Naive thymus-derived CD8-positive, alpha-beta T cell (primary cell): ENCODE measurements at regions of chr15 and their contacts with region 1.

Region 1: DNA sequence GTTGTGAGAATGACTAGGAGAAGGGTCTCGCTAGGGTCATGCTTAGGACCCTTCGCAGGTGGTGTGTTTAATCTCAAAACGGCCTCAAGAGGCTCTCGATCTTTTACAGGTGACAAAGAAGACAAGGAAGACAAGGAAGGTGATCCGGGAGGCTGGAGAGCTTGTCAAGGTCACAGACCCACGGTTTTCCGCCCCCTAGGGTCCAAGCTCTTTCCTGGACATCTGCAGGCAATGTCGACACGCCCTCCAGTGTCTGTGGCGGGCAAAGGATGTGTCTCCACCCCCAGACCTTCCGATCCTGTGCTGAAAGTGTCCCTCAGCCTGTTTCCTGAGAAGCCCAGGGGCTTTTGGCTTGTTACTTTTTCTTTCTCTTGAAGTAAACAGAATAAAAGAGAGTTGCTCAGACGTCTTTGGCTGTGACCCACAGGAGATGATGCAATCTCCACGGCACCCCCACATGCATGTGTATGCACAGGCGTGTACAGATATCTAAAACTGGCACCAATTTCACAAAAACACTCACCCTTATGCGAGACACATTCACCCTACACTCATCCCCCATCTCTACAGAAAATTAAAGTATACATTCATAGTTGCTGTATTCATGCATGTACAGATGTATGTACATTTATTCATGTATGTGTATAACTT is 108.8 kb downstream of the KLF13 start:
- DNase-seq: peak; percentile 49 to 94 (median 86)
- ATAC-seq: peak; percentile 73 to 78
- H3K4me3 Mint-ChIP-seq: peak overlapping the region; percentile 77 to 91 (median 84)
- H3K27ac Mint-ChIP-seq: peak overlapping the region; percentile 93 to 100 (median 100)
- H3K4me1 Mint-ChIP-seq: peaks cover 45 to 89% (median 79%) of the 10 kb centered on the region in 4 donors
- H3K27me3 Mint-ChIP-seq: no peaks in the 10 kb centered on the region

Region 2: DNA sequence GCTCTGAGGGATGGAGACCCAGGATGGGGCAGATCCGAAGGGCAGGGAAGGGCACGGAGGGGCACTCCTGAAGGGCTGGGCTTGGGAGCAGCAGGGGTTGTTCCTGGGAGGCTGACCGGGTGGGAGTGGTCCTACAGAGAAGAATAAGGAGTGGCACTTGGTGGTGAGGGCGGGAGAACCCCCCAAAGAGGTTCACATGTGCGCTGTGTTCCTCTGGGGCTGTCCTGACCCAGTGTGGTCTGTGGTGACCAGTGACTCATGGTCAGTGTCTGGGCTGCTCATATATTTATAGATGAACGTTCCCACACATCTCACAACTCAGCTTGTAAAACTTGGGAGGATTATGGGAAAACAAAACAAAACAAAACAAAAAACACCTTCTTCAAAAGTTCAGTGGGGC is 343.9 kb before region 1 on chr15:
- POLR2A ChIA-PET with region 1: no interaction called
- DNase-seq: no peak
- ATAC-seq: no peak
- H3K4me3 Mint-ChIP-seq: no peak overlapping the region
- H3K27ac Mint-ChIP-seq: no peak overlapping the region
- H3K4me1 Mint-ChIP-seq: no peaks in the 10 kb centered on the region
- H3K27me3 Mint-ChIP-seq: peaks cover 0 to 2% (median 0%) of the 10 kb centered on the region in 5 donors

Region 3: DNA sequence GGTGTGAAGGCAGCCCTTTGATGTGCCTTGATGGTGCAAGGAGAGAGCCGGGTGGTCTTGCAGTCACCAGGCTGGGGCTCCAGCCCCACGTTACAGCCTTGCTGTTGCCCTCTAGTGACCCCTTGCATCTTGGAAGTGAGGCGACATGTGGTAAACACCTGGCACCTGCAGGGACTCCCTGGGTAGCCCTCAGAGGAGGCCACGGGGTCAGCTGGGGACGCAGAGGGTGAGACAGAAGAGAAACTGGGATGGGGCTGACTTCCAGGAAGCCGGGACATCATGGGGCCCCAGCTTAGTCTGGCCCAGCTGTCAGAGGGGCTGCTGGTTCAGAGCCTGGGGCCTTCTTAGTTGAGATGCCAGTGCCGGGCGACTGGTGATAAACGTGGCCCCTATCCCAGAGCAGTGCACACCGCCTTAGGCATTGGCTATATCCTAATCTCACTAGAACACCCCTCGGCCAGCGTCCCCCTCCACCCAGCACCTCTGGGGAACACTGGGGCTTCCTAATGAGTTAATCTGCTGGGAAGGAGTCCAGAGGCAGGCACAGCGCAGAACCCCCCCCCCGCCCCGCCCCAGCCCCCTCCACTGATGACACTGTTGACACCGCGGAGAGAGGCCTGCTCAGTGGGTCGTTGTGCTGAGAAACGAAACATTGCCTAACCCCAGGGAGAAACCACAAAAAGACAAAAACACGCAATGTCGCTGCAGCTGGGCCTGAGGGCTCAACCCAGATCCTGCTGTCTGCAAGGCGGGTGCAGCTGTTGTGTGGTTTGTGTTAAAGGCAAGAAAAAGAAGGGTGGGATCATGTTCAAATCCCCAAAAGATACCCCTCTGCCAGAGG is 169.3 kb before region 1 on chr15:
- POLR2A ChIA-PET with region 1: interaction called, 40 read pairs
- DNase-seq: peak; percentile 22 to 89 (median 74)
- ATAC-seq: peak; percentile 80 to 89
- H3K4me3 Mint-ChIP-seq: peak overlapping the region; percentile 62 to 85 (median 80)
- H3K27ac Mint-ChIP-seq: peak overlapping the region; percentile 93 to 100 (median 97)
- H3K4me1 Mint-ChIP-seq: peaks cover 56 to 98% (median 95%) of the 10 kb centered on the region in 4 donors
- H3K27me3 Mint-ChIP-seq: no peaks in the 10 kb centered on the region

Region 4: GRCh38 chr15:31352911-31353811 is 82.2 kb before region 1 on chr15:
- POLR2A ChIA-PET with region 1: interaction called, 147 read pairs
- DNase-seq: peak in 8 of 10 donors; percentile 44 to 82 (median 74)
- ATAC-seq: peak; percentile 48 to 70
- H3K4me3 Mint-ChIP-seq: peak overlapping the region; percentile 71 to 94 (median 86)
- H3K27ac Mint-ChIP-seq: peak overlapping the region; percentile 96 to 100 (median 98)
- H3K4me1 Mint-ChIP-seq: peaks cover 65 to 100% (median 100%) of the 10 kb centered on the region in 4 donors
- H3K27me3 Mint-ChIP-seq: no peaks in the 10 kb centered on the region

Region 5: DNA sequence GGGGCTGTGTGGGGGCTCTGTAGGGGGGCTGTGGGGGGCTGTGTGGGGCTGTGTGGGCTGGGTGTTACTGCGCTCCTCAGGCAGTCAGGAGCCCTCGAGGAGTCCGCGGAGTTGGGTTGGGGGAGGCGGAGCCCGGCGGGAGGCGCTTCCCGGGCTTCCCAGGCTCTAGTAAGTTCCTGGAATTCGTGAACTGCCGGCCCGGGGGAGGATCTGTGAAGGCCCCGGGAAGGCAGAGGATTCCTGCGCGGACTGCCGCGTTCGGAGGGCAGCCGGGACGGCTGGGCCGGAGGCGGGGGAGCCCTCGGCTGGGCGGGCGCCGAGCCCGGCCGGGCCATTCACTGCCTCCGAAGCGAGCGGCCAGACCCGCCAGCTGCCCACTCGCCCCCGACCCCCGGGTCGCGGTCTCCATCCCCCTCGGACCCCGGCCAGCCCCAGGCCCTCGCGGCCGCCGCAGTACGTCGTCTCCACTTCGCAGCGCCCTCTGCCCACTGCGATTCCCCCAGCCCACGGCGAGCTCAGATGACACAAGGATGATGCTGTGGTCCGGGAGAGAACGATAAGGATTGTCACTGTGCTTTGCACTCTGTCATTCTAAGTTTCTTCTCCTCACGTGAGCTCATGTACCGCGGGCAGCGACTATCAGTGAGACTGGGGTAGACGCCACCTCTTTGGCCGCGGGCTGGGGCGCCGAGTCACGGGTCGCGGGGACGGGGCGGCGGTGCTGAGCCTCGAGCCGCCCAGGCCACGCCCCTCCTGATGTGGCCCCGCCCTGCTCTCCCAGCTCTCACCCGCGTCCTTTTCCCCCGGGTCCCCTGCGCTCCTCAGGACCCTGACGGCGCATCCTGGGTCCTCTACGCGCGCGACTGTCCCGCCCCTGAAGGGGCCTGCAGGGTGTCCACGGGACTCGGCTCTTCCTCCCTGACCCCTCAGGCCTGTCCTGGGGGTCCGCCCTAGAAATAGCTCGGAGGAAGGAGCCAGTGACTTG is 43.4 kb before region 1 on chr15:
- POLR2A ChIA-PET with region 1: interaction called, 143 read pairs
- DNase-seq: peak; percentile 69 to 88 (median 81)
- ATAC-seq: peak; percentile 74 to 83
- H3K4me3 Mint-ChIP-seq: peak overlapping the region; percentile 86 to 97 (median 95)
- H3K27ac Mint-ChIP-seq: peak overlapping the region; percentile 79 to 98 (median 97)
- H3K4me1 Mint-ChIP-seq: peaks cover 35 to 67% (median 57%) of the 10 kb centered on the region in 4 donors
- H3K27me3 Mint-ChIP-seq: no peaks in the 10 kb centered on the region

Region 6: GRCh38 chr15:31419820-31420219 is 15.6 kb before region 1 on chr15:
- POLR2A ChIA-PET with region 1: interaction called, 20 read pairs
- DNase-seq: no peak
- ATAC-seq: no peak
- H3K4me3 Mint-ChIP-seq: no peak overlapping the region
- H3K27ac Mint-ChIP-seq: no peak overlapping the region
- H3K4me1 Mint-ChIP-seq: no peaks in the 10 kb centered on the region
- H3K27me3 Mint-ChIP-seq: no peaks in the 10 kb centered on the region

Region 7: GRCh38 chr15:31488426-31489204 is 53.2 kb after region 1 on chr15:
- POLR2A ChIA-PET with region 1: interaction called, 168 read pairs
- DNase-seq: peak in 8 of 10 donors; percentile 17 to 71 (median 44)
- ATAC-seq: peak; percentile 28 to 43
- H3K4me3 Mint-ChIP-seq: peak overlapping the region in 1 of 10 donors; percentile 35
- H3K27ac Mint-ChIP-seq: peak overlapping the region; percentile 32 to 82 (median 66)
- H3K4me1 Mint-ChIP-seq: peaks cover 16 to 48% (median 35%) of the 10 kb centered on the region in 4 donors
- H3K27me3 Mint-ChIP-seq: peaks cover 0 to 5% (median 0%) of the 10 kb centered on the region in 5 donors

Region 8: DNA sequence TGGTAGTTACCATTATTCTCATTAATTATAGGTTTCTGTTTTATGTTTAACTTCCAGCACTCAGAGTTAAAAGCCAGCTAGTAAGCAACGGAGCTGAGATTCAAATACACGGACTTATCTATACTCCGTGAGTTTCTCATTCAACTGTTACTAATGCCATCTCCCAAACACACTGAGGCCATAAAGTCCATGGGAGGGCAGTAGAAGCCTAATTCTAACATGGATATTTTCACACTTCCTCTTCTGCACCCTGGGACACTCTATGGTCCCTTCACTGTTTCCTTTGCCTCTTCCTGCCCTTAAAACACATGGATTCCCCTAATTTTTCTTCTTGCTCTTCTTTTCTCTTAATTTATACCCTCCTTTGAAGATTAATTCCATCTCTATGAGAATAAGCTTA is 136.3 kb after region 1 on chr15:
- POLR2A ChIA-PET with region 1: no interaction called
- DNase-seq: no peak
- ATAC-seq: no peak
- H3K4me3 Mint-ChIP-seq: no peak overlapping the region
- H3K27ac Mint-ChIP-seq: no peak overlapping the region
- H3K4me1 Mint-ChIP-seq: no peaks in the 10 kb centered on the region
- H3K27me3 Mint-ChIP-seq: peaks cover 0 to 9% (median 2%) of the 10 kb centered on the region in 5 donors